Common myeloid progenitor, CD34-positive (primary cell): ENCODE measurements at regions of chr10 and their contacts with region 1.

Region 1: DNA sequence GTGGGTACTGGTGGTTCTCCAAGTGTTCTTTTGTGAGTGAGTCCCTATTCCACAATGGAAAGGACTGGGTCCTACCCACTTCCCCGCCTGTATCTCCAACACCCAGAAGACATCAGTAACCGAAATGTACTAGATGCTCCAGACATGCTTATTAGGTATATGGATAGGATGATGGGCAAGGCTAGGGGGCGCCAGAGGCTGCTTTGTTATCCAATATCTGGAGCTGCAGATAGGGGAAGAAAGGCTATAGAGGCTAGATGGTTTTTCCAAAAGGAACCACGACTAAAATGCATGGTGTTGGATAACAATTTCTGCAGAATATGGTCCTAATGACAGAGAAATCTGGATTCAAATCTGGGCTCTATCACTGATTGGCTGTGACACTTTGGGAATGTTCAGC is 56.2 kb upstream of the TM9SF3 start:
- DNase-seq: peak; percentile 83 to 91 (median 87)
- H3K4me3 ChIP-seq: no peak overlapping the region
- H3K27ac ChIP-seq: no peak overlapping the region
- H3K4me1 ChIP-seq: peaks cover 0 to 27% (median 2%) of the 10 kb centered on the region in 4 experiments
- H3K27me3 ChIP-seq: no peaks in the 10 kb centered on the region

Region 2: DNA sequence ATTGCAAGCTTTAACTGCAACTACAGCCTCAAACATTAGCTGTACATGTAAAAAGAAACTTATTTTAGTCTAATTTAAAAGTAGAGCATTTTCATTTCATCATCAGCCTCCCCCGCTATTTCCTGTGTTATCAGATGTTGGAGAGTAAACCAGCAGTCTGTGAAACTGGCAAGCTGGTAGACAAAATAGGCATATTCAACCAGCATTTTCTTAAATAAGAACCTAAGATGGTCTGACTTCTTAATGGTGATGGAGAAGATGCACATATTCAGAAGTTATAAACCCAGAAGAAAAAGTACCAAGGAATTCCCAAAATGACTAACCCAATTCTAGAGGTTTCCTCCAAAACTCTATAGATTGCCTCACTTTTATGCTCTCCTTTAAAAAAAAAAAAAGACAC is 52.4 kb after region 1 on chr10:
- CTCF ChIA-PET with region 1: interaction called, 19 read pairs
- POLR2A ChIA-PET with region 1: no interaction called
- DNase-seq: peak in 2 of 3 donors; percentile 67 to 77
- H3K4me3 ChIP-seq: peak overlapping the region in 2 of 7 experiments; percentile 35 to 51
- H3K27ac ChIP-seq: peak overlapping the region in 1 of 2 experiments; percentile 39
- H3K4me1 ChIP-seq: peaks cover 21 to 36% (median 27%) of the 10 kb centered on the region in 4 experiments
- H3K27me3 ChIP-seq: no peaks in the 10 kb centered on the region

Region 3: DNA sequence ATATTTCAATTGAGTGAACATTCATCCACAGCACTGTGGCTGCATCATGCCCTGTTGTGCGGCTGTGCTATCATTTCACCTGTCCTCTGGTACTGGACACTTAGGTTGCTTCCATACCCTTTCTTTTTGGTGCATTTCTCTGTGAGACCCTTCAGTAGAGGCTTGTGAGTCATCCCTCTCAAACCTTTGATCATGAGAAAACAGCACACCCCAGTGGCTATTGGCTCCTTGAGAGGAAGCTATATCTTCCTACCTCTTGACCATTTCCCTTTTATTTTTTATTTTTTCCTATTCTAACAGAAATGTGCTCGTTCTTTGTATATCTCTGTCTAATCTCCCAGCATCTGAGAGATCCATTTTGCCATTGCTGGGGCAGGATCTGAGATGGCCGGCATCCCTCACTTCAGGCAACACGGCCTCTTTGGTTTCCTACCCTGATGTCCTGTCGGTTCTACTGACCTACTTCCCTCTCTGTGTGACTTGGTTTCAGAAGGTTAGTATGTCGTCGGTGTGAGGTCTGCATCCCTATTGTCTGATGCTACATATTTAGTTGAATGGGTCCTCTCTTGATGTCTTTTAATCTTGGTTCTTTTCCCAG is 101.1 kb after region 1 on chr10:
- CTCF ChIA-PET with region 1: interaction called, 11 read pairs
- POLR2A ChIA-PET with region 1: no interaction called
- DNase-seq: peak in 2 of 3 donors; percentile 37 to 43
- H3K4me3 ChIP-seq: peak overlapping the region in 2 of 7 experiments; percentile 1 to 25
- H3K27ac ChIP-seq: no peak overlapping the region
- H3K4me1 ChIP-seq: peaks cover 25 to 63% (median 30%) of the 10 kb centered on the region in 4 experiments
- H3K27me3 ChIP-seq: no peaks in the 10 kb centered on the region

Region 4: DNA sequence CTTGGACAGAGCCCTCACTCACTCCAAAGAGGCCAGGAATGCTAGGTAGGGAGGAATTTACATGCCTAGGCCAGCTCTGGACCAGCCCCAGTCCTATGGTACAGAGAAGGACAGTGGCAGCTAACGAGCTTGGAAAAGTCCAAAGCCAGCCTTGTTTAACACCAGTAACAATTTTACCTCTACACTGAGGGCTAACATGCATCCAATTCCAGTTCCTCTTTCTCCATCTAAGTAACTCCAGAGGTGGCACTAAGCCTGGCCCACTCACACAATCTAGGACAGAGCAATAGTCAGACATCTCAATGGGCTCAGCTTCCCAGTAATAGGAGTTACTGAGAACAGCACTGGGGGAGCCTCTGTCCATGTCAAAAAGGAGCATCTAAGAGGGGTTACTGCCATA is 183.5 kb after region 1 on chr10:
- CTCF ChIA-PET with region 1: interaction called, 30 read pairs
- POLR2A ChIA-PET with region 1: interaction called, 3 read pairs
- DNase-seq: no peak
- H3K4me3 ChIP-seq: no peak overlapping the region
- H3K27ac ChIP-seq: no peak overlapping the region
- H3K4me1 ChIP-seq: peaks cover 6 to 14% (median 8%) of the 10 kb centered on the region in 4 experiments
- H3K27me3 ChIP-seq: no peaks in the 10 kb centered on the region

Region 5: GRCh38 chr10:96850825-96851224 is 207.9 kb after region 1 on chr10:
- CTCF ChIA-PET with region 1: no interaction called
- POLR2A ChIA-PET with region 1: no interaction called
- DNase-seq: no peak
- H3K4me3 ChIP-seq: no peak overlapping the region
- H3K27ac ChIP-seq: no peak overlapping the region
- H3K4me1 ChIP-seq: peaks cover 0 to 2% (median 0%) of the 10 kb centered on the region in 4 experiments
- H3K27me3 ChIP-seq: no peaks in the 10 kb centered on the region